ENCODE measurements at regions of chr10 and their contacts with region 1.

Region 1: DNA sequence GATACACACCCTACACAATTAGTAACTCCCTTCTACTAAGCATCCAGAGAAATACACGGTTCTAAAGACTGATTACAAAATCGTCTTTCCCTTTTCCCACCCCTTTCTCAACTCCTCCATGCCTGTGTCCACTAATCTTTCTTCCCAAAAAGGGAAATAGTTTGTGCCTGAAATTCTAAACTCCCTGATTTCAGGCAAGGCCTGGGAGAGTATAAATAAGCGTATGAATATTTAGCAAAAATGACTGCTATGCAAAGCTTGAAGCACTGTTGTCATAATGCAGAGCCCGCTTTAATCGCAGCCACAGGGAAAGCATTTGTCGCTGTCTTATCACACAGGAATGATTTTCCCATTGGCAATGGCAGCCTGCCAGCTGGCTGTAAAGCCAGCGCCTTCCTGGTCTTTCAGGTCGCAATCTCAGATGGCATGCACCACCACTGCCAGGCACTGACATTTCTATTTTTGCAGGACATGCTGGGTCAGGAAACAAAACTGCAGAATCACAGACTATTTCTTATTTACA is 142.9 kb upstream of the PCGF5 start:
- DNase-seq: peak in 1 of 2 donors; percentile 94
- H3K4me3 ChIP-seq: peak overlapping the region in 1 of 2 donors; percentile 34
- H3K27ac ChIP-seq: peak overlapping the region; percentile 83 to 93
- H3K4me1 ChIP-seq: peaks cover 11 to 24% of the 10 kb centered on the region in 2 donors
- H3K27me3 ChIP-seq: no peaks in the 10 kb centered on the region
- CTCF ChIP-seq: no peak

Region 2: GRCh38 chr10:91006001-91006751 is 71.4 kb before region 1 on chr10:
- intact Hi-C with region 1: loop called (anchors 5 kb)
- DNase-seq: peak in 1 of 2 donors; percentile 85
- H3K4me3 ChIP-seq: no peak overlapping the region
- H3K27ac ChIP-seq: peak overlapping the region; percentile 48 to 70
- H3K4me1 ChIP-seq: peaks cover 0 to 5% of the 10 kb centered on the region in 2 donors
- H3K27me3 ChIP-seq: no peaks in the 10 kb centered on the region
- CTCF ChIP-seq: peak; percentile 87 to 88 (median 88)

Measured in ascending aorta (tissue), 2 donors.